H1 (cell line): ENCODE measurements at regions of chr7 and their contacts with region 1.

Region 1: GRCh38 chr7:131654668-131655326 is 98.4 kb upstream of the PODXL start:
- DNase-seq: peak; percentile 70 to 100
- H3K4me3 ChIP-seq: peak overlapping the region in 1 of 4 experiments; percentile 9; a peak in 1 of 8 replicates
- H3K27ac ChIP-seq: no peak overlapping the region
- H3K4me1 ChIP-seq: peaks cover 7 to 30% (median 13%) of the 10 kb centered on the region in 4 experiments
- H3K27me3 ChIP-seq: no peaks in the 10 kb centered on the region
- CTCF ChIP-seq: peak; percentile 98 to 99 (median 98)
- EP300 ChIP-seq: no peak
- POLR2A ChIP-seq: no peak
- RAD21 ChIP-seq: peak; percentile 97 to 98

Region 2: DNA sequence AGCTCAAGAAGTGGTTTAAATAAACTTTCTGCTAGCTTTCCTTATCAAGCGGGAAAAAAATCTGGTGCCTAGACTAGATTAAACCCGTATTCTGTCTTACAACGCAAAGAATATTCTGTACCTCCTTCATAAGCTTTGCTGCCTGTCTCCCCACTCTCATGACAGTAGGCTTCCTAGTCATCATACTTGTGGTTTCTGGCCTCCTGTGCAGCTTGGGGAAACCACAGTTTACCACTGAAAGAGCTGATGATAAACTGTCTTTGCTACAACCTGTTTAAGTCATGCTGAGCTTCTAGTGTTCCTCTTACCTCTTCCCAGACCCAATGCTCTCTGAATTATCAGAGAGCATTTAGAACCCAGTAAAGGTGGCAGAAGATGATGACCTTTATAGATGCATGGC is 153.4 kb before region 1 on chr7:
- CTCF ChIA-PET with region 1: interaction called, 19 read pairs
- POLR2A ChIA-PET with region 1: interaction called, 4 read pairs
- DNase-seq: no peak
- H3K4me3 ChIP-seq: no peak overlapping the region
- H3K27ac ChIP-seq: no peak overlapping the region
- H3K4me1 ChIP-seq: peaks cover 0 to 5% (median 0%) of the 10 kb centered on the region in 4 experiments; a peak in 1 of 7 replicates
- H3K27me3 ChIP-seq: no peaks in the 10 kb centered on the region
- CTCF ChIP-seq: no peak
- EP300 ChIP-seq: no peak
- POLR2A ChIP-seq: no peak
- RAD21 ChIP-seq: no peak

Region 3: GRCh38 chr7:131527456-131527855 is 127.3 kb before region 1 on chr7:
- CTCF ChIA-PET with region 1: interaction called, 11 read pairs
- POLR2A ChIA-PET with region 1: interaction called, 3 read pairs
- DNase-seq: no peak
- H3K4me3 ChIP-seq: no peak overlapping the region
- H3K27ac ChIP-seq: no peak overlapping the region
- H3K4me1 ChIP-seq: peaks cover 3 to 27% (median 21%) of the 10 kb centered on the region in 4 experiments
- H3K27me3 ChIP-seq: no peaks in the 10 kb centered on the region
- CTCF ChIP-seq: no peak
- EP300 ChIP-seq: no peak
- POLR2A ChIP-seq: no peak
- RAD21 ChIP-seq: no peak

Region 4: DNA sequence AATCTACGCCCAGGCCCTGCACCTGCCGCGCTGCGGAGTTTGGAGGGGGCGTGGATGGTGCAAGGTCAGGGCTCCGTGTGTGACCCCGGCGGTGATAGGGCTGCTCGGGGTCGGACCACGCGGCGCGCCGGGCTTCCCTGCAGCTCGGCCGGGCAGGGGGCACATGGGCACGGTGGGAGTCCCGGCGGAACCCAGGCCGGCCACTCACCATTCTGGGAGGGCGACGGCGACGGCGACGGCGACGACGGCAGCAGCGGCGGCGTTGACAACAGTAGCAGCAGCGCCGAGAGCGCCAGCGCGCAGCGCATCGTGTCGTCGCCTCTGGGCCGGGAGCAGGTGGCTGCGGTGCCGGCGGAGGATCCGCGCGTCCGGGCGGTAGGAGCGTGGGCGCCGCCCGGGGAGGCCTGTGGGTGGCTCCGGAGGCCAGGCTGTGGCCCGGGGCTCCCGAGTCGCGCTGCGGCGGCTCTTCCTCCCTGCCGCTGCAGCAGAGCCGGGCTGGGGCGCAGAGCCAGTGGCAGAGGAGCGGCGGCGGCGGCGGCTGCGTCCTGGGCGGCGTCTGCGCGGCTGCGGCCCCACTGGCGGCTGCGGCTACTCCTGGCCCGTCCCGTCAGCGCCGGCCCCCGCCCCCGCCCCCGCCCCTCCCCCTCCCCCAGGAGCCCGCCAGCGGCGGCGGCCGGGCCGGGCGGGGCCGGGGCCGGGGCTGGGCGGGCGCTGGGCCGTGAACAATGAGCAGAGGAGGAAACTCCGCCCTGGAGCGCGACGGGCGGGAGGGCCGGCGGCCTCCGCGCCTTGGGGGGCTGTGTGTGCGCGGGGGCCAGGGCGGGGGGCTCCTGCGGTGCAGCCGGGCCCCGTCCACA is 98.5 kb before region 1 on chr7 and contains the start of gene PODXL:
- CTCF ChIA-PET with region 1: interaction called, 164 read pairs
- POLR2A ChIA-PET with region 1: interaction called, 23 read pairs
- DNase-seq: peak in 1 of 2 experiments; percentile 83
- H3K4me3 ChIP-seq: peak within 1 kb of the TSS; percentile 84 to 96 (median 92)
- H3K27ac ChIP-seq: peak within 1 kb of the TSS; percentile 51; the same call in 1 of the 2 replicates
- H3K4me1 ChIP-seq: peaks cover 4 to 26% (median 17%) of the 10 kb centered on the region in 4 experiments
- H3K27me3 ChIP-seq: no peaks in the 10 kb centered on the region
- CTCF ChIP-seq: no peak
- EP300 ChIP-seq: no peak
- POLR2A ChIP-seq: no peak
- RAD21 ChIP-seq: peak in 1 of 2 experiments; percentile 15; a peak in 1 of 4 replicates
- total RNA-seq, gene PODXL: 925 and 945 TPM in 2 replicates

Region 5: GRCh38 chr7:131591687-131592319 is 63.0 kb before region 1 on chr7:
- CTCF ChIA-PET with region 1: interaction called, 11 read pairs
- POLR2A ChIA-PET with region 1: no interaction called
- DNase-seq: no peak
- H3K4me3 ChIP-seq: no peak overlapping the region
- H3K27ac ChIP-seq: no peak overlapping the region
- H3K4me1 ChIP-seq: peaks cover 0 to 10% (median 3%) of the 10 kb centered on the region in 4 experiments; a peak in 5 of 7 replicates
- H3K27me3 ChIP-seq: 0 out of 7 replicates have a peak, but pooled peaks cover 0 to 3% (median 0%) of the 10 kb centered on the region in 4 experiments
- CTCF ChIP-seq: no peak
- EP300 ChIP-seq: no peak
- POLR2A ChIP-seq: no peak
- RAD21 ChIP-seq: no peak

Region 6: DNA sequence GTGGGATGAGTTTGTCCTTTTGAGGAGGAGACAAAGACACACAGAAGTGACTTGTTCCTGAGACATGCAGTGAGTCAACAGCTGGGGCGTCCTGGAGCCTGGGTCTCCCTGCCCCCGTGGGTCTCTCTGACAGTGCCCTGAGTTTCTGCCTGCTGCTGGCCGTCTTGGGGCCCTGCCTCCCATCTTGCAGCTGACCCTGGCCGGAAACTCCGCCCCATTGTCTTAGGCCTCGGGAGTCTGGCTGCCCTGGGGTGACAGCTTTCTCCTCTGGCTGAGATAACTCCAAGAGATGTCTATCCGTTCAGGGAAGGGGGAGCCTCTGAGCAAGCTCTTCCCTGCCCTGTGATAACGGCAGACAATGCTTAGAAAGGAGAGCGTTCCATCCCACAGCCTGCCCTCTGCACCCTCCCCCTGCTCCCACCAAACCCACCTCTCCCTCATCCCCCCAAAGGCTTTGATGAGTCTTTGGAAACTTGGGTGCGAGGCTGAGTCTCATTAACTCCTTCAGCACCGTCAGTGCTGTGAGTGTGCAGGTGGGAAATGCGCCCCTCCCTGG is 28.9 kb before region 1 on chr7:
- CTCF ChIA-PET with region 1: interaction called, 53 read pairs
- POLR2A ChIA-PET with region 1: interaction called, 10 read pairs
- DNase-seq: peak; percentile 76 to 82
- H3K4me3 ChIP-seq: no peak overlapping the region; a peak in 1 of 8 replicates
- H3K27ac ChIP-seq: peak overlapping the region; percentile 53; the same call in 1 of the 2 replicates
- H3K4me1 ChIP-seq: peaks cover 7 to 22% (median 15%) of the 10 kb centered on the region in 4 experiments
- H3K27me3 ChIP-seq: no peaks in the 10 kb centered on the region
- CTCF ChIP-seq: peak in 2 of 3 experiments; percentile 12 to 34; a peak in 3 of 4 replicates
- EP300 ChIP-seq: no peak; a peak in 1 of 3 replicates
- POLR2A ChIP-seq: no peak
- RAD21 ChIP-seq: peak in 1 of 2 experiments; percentile 20; a peak in 2 of 4 replicates